ENCODE measurements at regions of chr18 and their contacts with region 1.

Region 1: GRCh38 chr18:60549338-60549960 is 176.9 kb upstream of the MC4R start:
- DNase-seq: peak; percentile 66
- ATAC-seq: no peak
- H3K4me3 ChIP-seq: peak overlapping the region in 1 of 2 experiments; percentile 3; a peak in 1 of 4 replicates
- H3K27ac ChIP-seq: no peak overlapping the region
- H3K4me1 ChIP-seq: no peaks in the 10 kb centered on the region
- H3K27me3 ChIP-seq: no peaks in the 10 kb centered on the region
- CTCF ChIP-seq: peak; percentile 67 to 78 (median 73); a peak in 5 of 6 replicates
- POLR2A ChIP-seq: no peak
- RAD21 ChIP-seq: peak; percentile 87

Region 2: GRCh38 chr18:59783138-59783537 is 766.3 kb before region 1 on chr18:
- CTCF ChIA-PET with region 1: no interaction called
- POLR2A ChIA-PET with region 1: no interaction called
- RAD21 ChIA-PET with region 1: no interaction called
- intact Hi-C with region 1: loop called (anchors 5 kb)
- DNase-seq: peak; percentile 85
- ATAC-seq: peak; percentile 96
- H3K4me3 ChIP-seq: peak overlapping the region; percentile 22 to 34; a peak in 3 of 4 replicates
- H3K27ac ChIP-seq: no peak overlapping the region
- H3K4me1 ChIP-seq: peaks cover 11 to 31% of the 10 kb centered on the region in 2 experiments
- H3K27me3 ChIP-seq: no peaks in the 10 kb centered on the region
- CTCF ChIP-seq: peak; percentile 66 to 82 (median 78); a peak in 5 of 6 replicates
- POLR2A ChIP-seq: no peak
- RAD21 ChIP-seq: peak; percentile 79

Region 3: DNA sequence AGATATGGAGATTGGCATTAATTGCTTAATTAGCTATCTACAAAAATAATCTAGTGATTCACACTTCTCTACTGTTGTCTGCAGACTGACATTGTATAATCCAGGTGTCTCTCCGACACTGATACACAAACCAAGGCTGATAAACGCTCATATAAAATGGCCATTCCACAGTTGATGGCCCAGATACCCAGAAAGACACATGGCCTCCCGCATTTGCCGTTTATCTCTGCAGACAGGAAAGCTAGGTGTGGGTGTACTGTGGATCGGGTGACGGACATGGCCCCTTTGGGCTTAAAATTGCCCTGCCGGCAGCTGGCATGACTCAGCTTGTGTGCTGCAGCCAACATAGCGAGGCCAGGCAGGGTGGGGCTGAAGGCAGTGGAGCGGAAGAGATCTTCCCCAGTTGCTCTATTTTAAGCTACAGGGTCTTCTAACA is 631.1 kb before region 1 on chr18:
- CTCF ChIA-PET with region 1: no interaction called
- POLR2A ChIA-PET with region 1: no interaction called
- RAD21 ChIA-PET with region 1: no interaction called
- intact Hi-C with region 1: loop called (anchors 10 kb)
- DNase-seq: peak; percentile 66
- ATAC-seq: peak; percentile 71
- H3K4me3 ChIP-seq: peak overlapping the region in 1 of 2 experiments; percentile 36; a peak in 2 of 4 replicates
- H3K27ac ChIP-seq: peak overlapping the region; percentile 90
- H3K4me1 ChIP-seq: peaks cover 50 to 84% of the 10 kb centered on the region in 2 experiments
- H3K27me3 ChIP-seq: no peaks in the 10 kb centered on the region
- CTCF ChIP-seq: no peak
- POLR2A ChIP-seq: no peak
- RAD21 ChIP-seq: no peak

Region 4: GRCh38 chr18:59988098-59988706 is 561.2 kb before region 1 on chr18:
- CTCF ChIA-PET with region 1: interaction called, 16 read pairs
- POLR2A ChIA-PET with region 1: no interaction called
- RAD21 ChIA-PET with region 1: no interaction called
- intact Hi-C with region 1: loop called (anchors 2 kb)
- DNase-seq: peak; percentile 49
- ATAC-seq: peak; percentile 70
- H3K4me3 ChIP-seq: no peak overlapping the region
- H3K27ac ChIP-seq: no peak overlapping the region
- H3K4me1 ChIP-seq: peaks cover 0 to 31% of the 10 kb centered on the region in 2 experiments; a peak in 3 of 4 replicates
- H3K27me3 ChIP-seq: no peaks in the 10 kb centered on the region
- CTCF ChIP-seq: peak; percentile 66 to 95 (median 90); a peak in 5 of 6 replicates
- POLR2A ChIP-seq: no peak
- RAD21 ChIP-seq: peak; percentile 88

Region 5: GRCh38 chr18:59996370-59996966 is 553.0 kb before region 1 on chr18:
- CTCF ChIA-PET with region 1: interaction called, 32 read pairs
- POLR2A ChIA-PET with region 1: no interaction called
- RAD21 ChIA-PET with region 1: no interaction called
- intact Hi-C with region 1: loop called (anchors 1 kb)
- DNase-seq: peak; percentile 59
- ATAC-seq: peak; percentile 84
- H3K4me3 ChIP-seq: no peak overlapping the region
- H3K27ac ChIP-seq: no peak overlapping the region
- H3K4me1 ChIP-seq: peaks cover 6 to 11% of the 10 kb centered on the region in 2 experiments; a peak in 3 of 4 replicates
- H3K27me3 ChIP-seq: no peaks in the 10 kb centered on the region
- CTCF ChIP-seq: peak; percentile 76 to 90 (median 85)
- POLR2A ChIP-seq: no peak
- RAD21 ChIP-seq: peak; percentile 87

Region 6: GRCh38 chr18:60826346-60826745 is 276.9 kb after region 1 on chr18:
- CTCF ChIA-PET with region 1: no interaction called
- POLR2A ChIA-PET with region 1: no interaction called
- RAD21 ChIA-PET with region 1: no interaction called
- intact Hi-C with region 1: no loop called
- DNase-seq: no peak
- ATAC-seq: peak; percentile 52; the same call in 1 of the 2 replicates
- H3K4me3 ChIP-seq: no peak overlapping the region
- H3K27ac ChIP-seq: no peak overlapping the region
- H3K4me1 ChIP-seq: no peaks in the 10 kb centered on the region
- H3K27me3 ChIP-seq: no peaks in the 10 kb centered on the region
- CTCF ChIP-seq: peak in 1 of 3 experiments; percentile 20; a peak in 2 of 6 replicates
- POLR2A ChIP-seq: no peak
- RAD21 ChIP-seq: no peak

Measured in HCT116 (cell line).